Left ventricle myocardium superior (tissue), 1 donor: ENCODE measurements at regions of chr17 and their contacts with region 1.

Region 1: DNA sequence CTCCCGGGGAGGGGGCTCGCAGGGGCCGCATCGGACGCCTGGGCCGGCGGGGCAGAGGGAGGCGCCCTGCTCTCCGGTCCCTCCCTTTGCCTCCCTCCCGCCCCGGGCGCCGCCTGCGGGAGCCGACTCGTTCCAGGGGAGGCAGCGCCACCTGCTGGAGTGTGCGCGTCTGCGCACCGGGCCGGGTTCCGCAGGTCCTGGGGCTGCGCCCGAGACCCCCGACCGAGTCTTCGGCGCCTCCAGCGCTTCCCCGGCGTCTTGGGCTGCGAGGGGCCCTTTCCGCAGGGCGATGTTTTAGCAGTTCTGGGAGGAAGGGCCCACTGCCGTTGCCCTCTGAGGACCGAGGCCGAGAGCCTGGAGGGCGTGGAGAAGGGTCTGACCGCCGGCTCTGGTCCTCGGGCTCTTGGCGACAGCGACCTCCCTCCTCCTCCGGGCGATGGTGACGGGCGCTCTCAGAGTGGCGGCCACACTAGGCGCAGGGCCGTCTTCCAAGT is 106.3 kb downstream of the SEC14L1 start:
- DNase-seq: peak; percentile 95
- ATAC-seq: peak; percentile 97

Region 2: DNA sequence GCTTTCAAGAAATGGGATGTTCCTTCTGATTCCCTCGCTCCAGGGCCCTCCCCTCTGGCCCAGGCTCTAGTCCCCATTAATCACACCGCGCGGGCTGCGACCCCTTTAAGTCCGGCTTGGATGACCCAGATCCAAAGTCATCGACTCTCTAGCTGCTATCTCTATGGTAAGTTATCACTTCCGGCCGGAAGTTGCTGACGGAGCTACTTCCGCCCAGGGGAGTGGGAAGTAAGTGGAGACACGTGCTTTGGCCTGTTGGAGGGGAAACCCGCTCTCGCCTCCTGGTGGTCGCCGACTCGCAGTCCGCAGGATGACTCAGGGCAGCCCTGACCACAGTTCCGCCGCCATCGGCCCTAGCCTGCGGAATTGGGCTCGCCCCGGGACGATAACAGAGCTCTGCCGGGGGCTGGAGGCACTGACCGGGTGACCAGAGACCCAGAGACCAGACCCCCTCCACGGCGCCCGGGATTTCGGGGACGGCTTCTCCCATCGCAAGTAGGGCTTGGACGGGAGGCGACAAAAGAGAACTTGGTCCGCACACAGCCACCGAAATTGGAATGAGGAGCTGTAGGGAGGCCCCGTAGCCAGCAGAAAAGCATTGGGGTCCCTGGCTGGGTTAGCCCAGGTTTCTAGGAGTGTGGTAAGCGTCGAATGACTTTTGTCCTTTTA is 158.5 kb before region 1 on chr17:
- intact Hi-C with region 1: loop called (anchors 5 kb)
- DNase-seq: peak; percentile 93
- ATAC-seq: peak; percentile 94